ENCODE measurements at regions of chr7 and their contacts with region 1.

Region 1: GRCh38 chr7:111846898-111847297 is 284.6 kb upstream of the IMMP2L start:
- DNase-seq: no peak
- ATAC-seq: no peak

Region 2: DNA sequence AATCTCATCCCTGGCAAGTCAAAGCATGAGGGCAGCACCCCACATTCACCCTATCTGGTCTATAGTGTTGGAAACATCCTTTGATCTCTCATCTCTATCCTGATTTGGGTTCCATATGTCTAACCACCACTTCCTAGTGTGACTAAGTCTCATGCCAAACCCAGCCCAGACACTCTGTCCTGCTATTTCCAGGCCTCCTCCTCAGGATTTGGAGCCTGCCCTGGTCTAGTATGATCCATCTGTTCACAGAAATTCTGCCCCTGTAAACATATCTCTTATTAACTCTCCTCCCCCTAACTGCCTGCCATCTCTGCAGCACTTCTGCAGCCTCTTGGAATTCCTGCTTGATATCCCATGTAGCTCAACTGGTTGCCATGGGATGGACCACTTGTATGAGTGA is 36.3 kb after region 1 on chr7:
- intact Hi-C with region 1: loop called (anchors 1 kb)
- DNase-seq: no peak
- ATAC-seq: no peak

Measured in sciatic nerve (tissue), 2 donors.